ENCODE measurements at regions of chr17 and their contacts with region 1.

Region 1: DNA sequence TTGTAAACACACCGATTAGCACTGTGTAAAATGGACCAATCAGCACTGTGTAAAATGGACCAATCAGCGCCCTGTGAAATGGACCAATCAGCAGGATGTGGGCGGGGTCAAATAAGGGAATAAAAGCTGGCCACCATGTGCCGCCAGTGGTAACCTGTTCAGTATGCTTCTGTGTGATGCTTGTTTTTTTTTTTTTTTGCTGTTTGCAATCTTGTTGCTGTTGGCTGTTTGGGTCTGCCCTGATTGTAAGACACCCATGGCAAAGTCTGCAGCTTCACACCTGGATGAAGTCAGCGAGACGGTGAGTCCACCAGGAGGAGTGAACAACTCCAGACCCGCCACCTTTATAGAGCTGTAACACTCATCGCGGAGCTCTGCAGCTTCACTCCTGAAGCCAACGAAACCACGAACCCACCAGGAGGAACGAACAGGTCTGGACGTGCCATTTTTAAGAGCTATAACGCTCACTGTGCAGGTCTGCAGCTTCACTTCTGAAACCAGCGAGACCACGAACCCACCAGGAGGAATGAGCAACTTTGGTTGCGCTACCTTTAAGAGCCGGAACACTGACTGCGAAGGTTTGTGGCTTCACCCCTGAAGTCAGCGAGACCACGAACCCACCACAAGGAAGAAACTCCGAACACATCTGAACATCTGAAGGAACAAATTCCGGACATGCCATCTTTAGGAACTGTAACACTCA is 85.0 kb upstream of the MED9 start:
- DNase-seq: peak; percentile 76 to 81 (median 79)
- H3K4me3 ChIP-seq: peak overlapping the region; percentile 49 to 53
- H3K4me3 Mint-ChIP-seq: peak overlapping the region; percentile 85 to 94 (median 90)
- H3K27ac ChIP-seq: peak overlapping the region; percentile 28
- H3K27ac Mint-ChIP-seq: peak overlapping the region; percentile 77 to 96 (median 87)
- H3K4me1 ChIP-seq: peaks cover 21% of the 10 kb centered on the region
- H3K4me1 Mint-ChIP-seq: peaks cover 12 to 25% (median 18%) of the 10 kb centered on the region in 4 donors
- H3K27me3 ChIP-seq: no peaks in the 10 kb centered on the region
- H3K27me3 Mint-ChIP-seq: peaks cover 2% of the 10 kb centered on the region in 2 donors

Region 2: GRCh38 chr17:17403899-17404576 is 12.2 kb after region 1 on chr17:
- CTCF ChIA-PET with region 1: interaction called, 5 read pairs
- POLR2A ChIA-PET with region 1: interaction called, 24 read pairs
- intact Hi-C with region 1: no loop called
- DNase-seq: peak; percentile 50 to 60 (median 51)
- H3K4me3 ChIP-seq: peak overlapping the region; percentile 17 to 44
- H3K4me3 Mint-ChIP-seq: peak overlapping the region; percentile 54 to 85 (median 80)
- H3K27ac ChIP-seq: peak overlapping the region; percentile 14
- H3K27ac Mint-ChIP-seq: peak overlapping the region; percentile 82 to 97 (median 91)
- H3K4me1 ChIP-seq: peaks cover 43% of the 10 kb centered on the region
- H3K4me1 Mint-ChIP-seq: peaks cover 40 to 84% (median 59%) of the 10 kb centered on the region in 4 donors
- H3K27me3 ChIP-seq: no peaks in the 10 kb centered on the region
- H3K27me3 Mint-ChIP-seq: no peaks in the 10 kb centered on the region

Region 3: GRCh38 chr17:17653343-17653742 is 261.5 kb after region 1 on chr17:
- CTCF ChIA-PET with region 1: no interaction called
- POLR2A ChIA-PET with region 1: no interaction called
- intact Hi-C with region 1: no loop called
- DNase-seq: no peak
- H3K4me3 ChIP-seq: no peak overlapping the region
- H3K4me3 Mint-ChIP-seq: no peak overlapping the region
- H3K27ac ChIP-seq: no peak overlapping the region
- H3K27ac Mint-ChIP-seq: no peak overlapping the region
- H3K4me1 ChIP-seq: no peaks in the 10 kb centered on the region
- H3K4me1 Mint-ChIP-seq: no peaks in the 10 kb centered on the region
- H3K27me3 ChIP-seq: no peaks in the 10 kb centered on the region
- H3K27me3 Mint-ChIP-seq: peaks cover 0 to 4% of the 10 kb centered on the region in 2 donors

Measured in CD4-positive, alpha-beta memory T cell (primary cell).